AG04449 (cell line): ENCODE measurements at regions of chr2 and their contacts with region 1.

Region 1: DNA sequence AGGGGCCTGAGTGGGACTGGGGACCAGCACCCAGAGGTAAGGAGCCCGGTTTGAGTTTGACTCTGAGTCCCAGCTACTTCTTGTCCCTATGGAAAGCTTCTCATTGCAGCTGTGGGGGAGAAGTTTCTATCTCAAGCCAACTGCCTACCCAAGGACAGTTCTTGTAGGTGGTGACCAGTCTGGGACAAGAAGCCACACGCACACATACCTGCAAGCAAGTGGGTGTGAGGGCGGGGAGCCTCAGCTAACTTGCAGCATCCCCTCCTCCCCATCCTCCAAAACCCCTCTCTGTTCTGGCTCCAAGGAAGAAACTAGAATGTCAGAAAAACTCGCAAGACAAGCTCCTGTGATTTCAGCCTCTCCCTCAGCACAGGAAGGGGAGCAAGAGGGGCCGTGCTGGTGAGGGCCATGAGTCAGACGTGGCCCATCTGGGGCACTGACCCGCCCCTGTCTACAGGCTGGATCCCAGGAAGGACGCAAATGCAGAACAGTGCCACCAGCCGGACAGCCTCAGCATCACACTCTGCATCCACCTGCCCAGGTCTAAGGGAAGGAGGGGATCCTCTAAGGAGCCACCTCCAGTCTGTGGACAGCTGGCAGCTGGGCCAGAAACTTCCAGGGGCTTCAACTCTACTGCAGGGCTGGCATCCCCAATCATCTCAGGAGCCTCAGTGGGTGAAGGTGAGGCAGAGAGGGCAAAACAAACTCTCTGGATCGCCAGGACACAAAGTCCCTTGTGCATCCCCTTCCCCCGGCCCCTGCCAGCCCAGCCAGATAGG is 103.4 kb downstream of the TNS1 start:
- DNase-seq: no peak
- H3K4me3 ChIP-seq: no peak overlapping the region
- CTCF ChIP-seq: peak; percentile 85

Region 2: GRCh38 chr2:217880287-217880889 is 19.0 kb before region 1 on chr2:
- CTCF ChIA-PET with region 1: interaction called, 182 read pairs
- POLR2A ChIA-PET with region 1: no interaction called
- DNase-seq: no peak
- H3K4me3 ChIP-seq: no peak overlapping the region
- CTCF ChIP-seq: no peak

Region 3: DNA sequence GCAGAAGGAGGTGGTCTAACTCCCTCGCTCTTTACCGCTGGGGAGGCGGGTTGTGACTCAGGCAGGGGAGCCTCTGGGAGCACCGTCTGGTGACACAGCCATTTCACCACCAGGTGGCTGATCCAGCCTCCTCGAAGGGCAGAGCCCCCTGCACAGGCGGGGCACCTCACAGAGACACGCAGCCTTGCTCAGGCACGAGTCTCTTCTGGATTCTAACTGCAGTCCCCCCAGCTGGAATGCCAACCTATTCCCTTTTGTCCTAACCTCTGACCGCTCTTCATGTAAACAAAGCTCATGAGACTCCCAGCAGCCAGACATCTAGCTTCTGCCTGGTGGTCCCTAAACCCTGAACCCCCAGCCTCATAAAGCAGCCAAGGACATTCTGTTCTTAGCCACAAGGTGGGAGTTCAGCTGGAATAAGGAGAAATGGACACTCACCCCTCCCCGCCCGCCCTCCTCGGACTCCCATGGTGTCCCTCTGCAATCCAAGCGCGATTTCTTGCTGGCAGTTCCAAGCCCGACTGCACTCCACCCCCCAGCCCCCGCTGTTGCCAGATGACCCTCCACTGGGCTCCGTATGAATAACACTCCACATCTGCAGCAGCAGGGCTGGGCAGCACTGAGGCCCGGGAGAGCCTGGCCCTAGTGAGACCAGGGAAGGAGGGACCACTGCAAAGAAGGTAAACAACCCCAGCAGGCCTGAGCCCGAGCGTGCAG is 19.0 kb after region 1 on chr2:
- CTCF ChIA-PET with region 1: interaction called, 17 read pairs
- POLR2A ChIA-PET with region 1: interaction called, 3 read pairs
- DNase-seq: no peak
- H3K4me3 ChIP-seq: no peak overlapping the region
- CTCF ChIP-seq: peak; percentile 34

Region 4: DNA sequence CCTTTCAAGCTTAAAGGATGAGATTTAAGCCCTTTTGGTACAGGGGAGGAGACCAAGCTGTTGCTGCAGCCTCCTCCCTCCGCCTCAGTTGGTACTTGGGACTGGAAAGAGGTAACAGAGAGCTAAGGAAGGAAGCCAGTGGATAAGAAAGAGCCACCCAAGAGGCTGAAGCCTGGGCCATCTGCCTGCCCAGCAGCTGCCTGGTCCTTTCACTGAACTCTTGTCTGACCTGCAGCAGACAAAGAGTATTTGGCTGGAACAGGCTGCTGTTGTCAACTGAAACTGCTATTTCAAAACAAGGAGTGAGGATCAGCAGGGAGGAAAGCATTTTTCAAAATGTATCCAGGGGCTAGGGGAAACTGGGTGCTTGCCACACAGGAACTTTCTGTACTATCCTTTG is 73.1 kb after region 1 on chr2:
- CTCF ChIA-PET with region 1: interaction called, 436 read pairs
- POLR2A ChIA-PET with region 1: no interaction called
- DNase-seq: no peak
- H3K4me3 ChIP-seq: no peak overlapping the region
- CTCF ChIP-seq: no peak